ENCODE measurements at regions of chr12 and their contacts with region 1.

Region 1: GRCh38 chr12:59087077-59087673 is 166.9 kb upstream of the LRIG3 start:
- DNase-seq: no peak
- H3K4me3 ChIP-seq: no peak overlapping the region
- H3K27ac ChIP-seq: no peak overlapping the region
- H3K4me1 ChIP-seq: peaks cover 12% of the 10 kb centered on the region
- H3K27me3 ChIP-seq: no peaks in the 10 kb centered on the region
- CTCF ChIP-seq: peak; percentile 63 to 72

Region 2: DNA sequence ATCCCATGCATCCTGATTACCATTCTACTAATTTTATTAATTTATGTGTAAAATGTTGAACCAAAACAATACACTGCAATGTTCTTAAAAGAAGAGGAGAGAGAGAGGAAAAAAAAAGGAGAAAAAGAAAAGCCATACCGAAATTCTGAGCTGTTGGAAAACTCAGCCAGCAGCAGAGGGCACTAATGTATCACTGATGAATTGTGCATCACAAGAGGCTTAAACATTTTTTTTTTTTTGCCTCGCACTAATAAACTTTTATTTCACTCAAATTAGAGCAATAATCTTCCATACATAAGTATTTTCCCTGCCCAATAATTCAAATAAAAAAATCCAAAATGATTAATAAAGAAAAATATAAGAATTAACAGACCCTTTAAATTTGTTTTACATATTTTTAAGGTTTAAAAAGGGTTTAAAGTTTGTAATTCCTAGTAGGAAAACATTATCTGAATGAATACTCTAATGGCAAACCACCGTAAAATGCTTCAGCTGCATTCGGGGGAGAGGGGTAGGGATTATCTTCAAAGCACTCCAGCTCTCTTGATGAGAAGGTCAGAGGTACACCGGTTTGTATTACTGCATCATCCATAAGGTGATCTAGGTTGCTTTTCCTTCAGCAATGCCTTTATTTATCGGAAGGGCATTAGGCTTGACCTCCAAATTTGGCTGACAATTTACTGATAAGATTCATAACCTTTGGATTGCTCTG is 1103.9 kb before region 1 on chr12:
- CTCF ChIA-PET with region 1: no interaction called
- dilution Hi-C with region 1: no loop called
- in situ Hi-C with region 1: loop called in 1 of 2 experiments (anchors 25 kb)
- intact Hi-C with region 1: loop called (anchors 10 kb)
- DNase-seq: peak; percentile 28
- H3K4me3 ChIP-seq: no peak overlapping the region
- H3K27ac ChIP-seq: no peak overlapping the region
- H3K4me1 ChIP-seq: no peaks in the 10 kb centered on the region
- H3K27me3 ChIP-seq: no peaks in the 10 kb centered on the region
- CTCF ChIP-seq: peak; percentile 60 to 70

Region 3: DNA sequence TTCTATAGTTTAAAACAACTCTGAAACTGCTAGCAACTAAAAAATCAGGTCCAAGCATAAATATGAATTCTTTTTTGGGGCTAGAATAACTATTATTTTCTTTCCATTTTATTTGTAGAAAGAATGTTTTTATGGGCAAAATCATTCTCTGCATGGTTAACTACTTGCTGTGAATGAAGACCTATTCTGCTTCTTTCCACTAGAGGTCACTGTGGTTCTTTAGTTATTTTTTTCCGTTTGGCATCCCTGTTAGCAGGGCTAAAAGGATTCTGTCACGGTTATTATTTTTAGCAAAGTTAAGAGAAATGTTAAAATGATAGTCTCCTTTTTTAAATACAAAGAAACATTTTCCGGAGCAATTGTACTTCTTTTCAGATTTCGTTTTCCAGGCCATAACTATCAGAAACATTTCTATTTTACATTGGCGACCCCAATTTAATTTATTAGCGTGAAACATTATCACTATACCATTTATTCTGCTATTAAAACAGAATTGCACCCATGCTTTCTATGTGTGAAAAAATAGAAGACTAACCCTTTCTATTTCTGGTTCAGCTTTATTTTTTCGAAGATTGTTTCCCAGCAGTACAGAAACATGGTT is 741.0 kb before region 1 on chr12:
- CTCF ChIA-PET with region 1: no interaction called
- dilution Hi-C with region 1: no loop called
- in situ Hi-C with region 1: loop called in 1 of 2 experiments (anchors 25 kb)
- intact Hi-C with region 1: loop called (anchors 1 kb)
- DNase-seq: peak; percentile 26
- H3K4me3 ChIP-seq: no peak overlapping the region
- H3K27ac ChIP-seq: no peak overlapping the region
- H3K4me1 ChIP-seq: no peaks in the 10 kb centered on the region
- H3K27me3 ChIP-seq: no peaks in the 10 kb centered on the region
- CTCF ChIP-seq: peak; percentile 73 to 77

Region 4: GRCh38 chr12:58540480-58541299 is 546.5 kb before region 1 on chr12:
- CTCF ChIA-PET with region 1: interaction called, 9 read pairs
- dilution Hi-C with region 1: no loop called
- in situ Hi-C with region 1: loop called (anchors 10 to 25 kb)
- intact Hi-C with region 1: loop called (anchors 1 kb)
- DNase-seq: peak; percentile 62
- H3K4me3 ChIP-seq: no peak overlapping the region
- H3K27ac ChIP-seq: no peak overlapping the region
- H3K4me1 ChIP-seq: peaks cover 27% of the 10 kb centered on the region
- H3K27me3 ChIP-seq: no peaks in the 10 kb centered on the region
- CTCF ChIP-seq: peak; percentile 68 to 90

Region 5: DNA sequence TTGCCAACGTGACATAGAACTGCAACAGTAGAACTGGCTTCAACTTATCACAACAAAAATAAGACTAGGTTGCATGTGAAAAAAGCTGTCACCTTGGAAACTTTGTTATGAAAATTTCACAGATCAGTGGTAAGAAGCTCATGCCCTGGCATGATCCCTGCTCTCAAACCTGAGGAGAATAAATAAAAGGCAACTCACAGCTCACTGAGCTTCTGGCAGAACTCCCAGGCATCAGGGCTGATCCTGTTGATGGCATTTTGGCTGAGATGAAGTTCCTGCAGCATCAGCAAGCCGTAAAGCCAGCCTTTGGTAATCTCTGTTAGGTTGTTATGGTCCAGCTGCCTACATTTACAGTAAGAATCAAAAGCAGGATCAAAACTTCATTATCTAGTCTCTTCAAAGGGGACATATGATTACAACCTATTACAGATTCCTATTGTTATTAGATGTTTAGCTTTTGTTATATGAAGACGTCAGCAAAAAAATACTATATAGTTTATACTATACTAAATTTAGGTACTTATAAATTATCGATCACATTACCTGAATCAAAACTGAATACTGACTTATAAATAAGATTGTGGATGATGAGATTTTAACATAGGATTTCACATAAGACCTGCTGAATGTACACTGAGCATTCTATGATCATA is 198.9 kb before region 1 on chr12:
- CTCF ChIA-PET with region 1: no interaction called
- dilution Hi-C with region 1: no loop called
- in situ Hi-C with region 1: no loop called
- intact Hi-C with region 1: loop called (anchors 5 kb)
- DNase-seq: peak; percentile 89
- H3K4me3 ChIP-seq: no peak overlapping the region
- H3K27ac ChIP-seq: peak overlapping the region; percentile 73
- H3K4me1 ChIP-seq: peaks cover 24% of the 10 kb centered on the region
- H3K27me3 ChIP-seq: no peaks in the 10 kb centered on the region
- CTCF ChIP-seq: no peak